ENCODE measurements at regions of chr11 and their contacts with region 1.

Region 1: GRCh38 chr11:76807206-76807875 is 24.2 kb downstream of the TSKU start:
- DNase-seq: peak; percentile 90 to 97 (median 95)
- ATAC-seq: peak; percentile 71 to 81
- H3K4me3 ChIP-seq: no peak overlapping the region
- H3K27ac ChIP-seq: no peak overlapping the region
- H3K4me1 ChIP-seq: peaks cover 6% of the 10 kb centered on the region
- H3K27me3 ChIP-seq: no peaks in the 10 kb centered on the region

Region 2: GRCh38 chr11:76588455-76589325 is 218.7 kb before region 1 on chr11:
- intact Hi-C with region 1: no loop called
- DNase-seq: peak; percentile 80 to 90 (median 89)
- ATAC-seq: peak; percentile 92 to 96
- H3K4me3 ChIP-seq: no peak overlapping the region
- H3K27ac ChIP-seq: peak overlapping the region; percentile 97
- H3K4me1 ChIP-seq: peaks cover 2% of the 10 kb centered on the region
- H3K27me3 ChIP-seq: no peaks in the 10 kb centered on the region

Region 3: DNA sequence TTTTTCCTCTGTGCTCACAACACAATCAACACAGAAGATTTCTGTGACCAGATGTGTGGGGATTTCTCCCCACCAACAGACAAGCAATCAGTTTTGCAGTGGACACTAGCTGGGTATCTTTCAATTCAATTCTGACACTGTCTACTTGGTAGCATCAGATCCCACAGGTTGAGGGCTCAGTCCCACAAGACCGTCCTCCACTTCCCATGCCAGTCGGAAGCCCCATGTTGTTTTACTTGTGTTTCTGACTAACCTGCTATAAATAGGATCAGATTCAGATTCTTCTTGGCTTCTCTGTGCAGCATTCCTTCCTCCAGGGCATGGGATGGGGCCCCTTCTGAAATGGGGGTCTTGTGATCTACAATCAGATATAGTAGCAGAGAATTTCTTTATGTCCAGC is 73.0 kb after region 1 on chr11:
- intact Hi-C with region 1: no loop called
- DNase-seq: no peak
- ATAC-seq: no peak
- H3K4me3 ChIP-seq: no peak overlapping the region
- H3K27ac ChIP-seq: no peak overlapping the region
- H3K4me1 ChIP-seq: no peaks in the 10 kb centered on the region
- H3K27me3 ChIP-seq: no peaks in the 10 kb centered on the region

Region 4: GRCh38 chr11:76919887-76920746 is 112.8 kb after region 1 on chr11:
- intact Hi-C with region 1: loop called (anchors 2 to 5 kb)
- DNase-seq: peak; percentile 77 to 91 (median 86)
- ATAC-seq: peak; percentile 91 to 95
- H3K4me3 ChIP-seq: no peak overlapping the region
- H3K27ac ChIP-seq: no peak overlapping the region
- H3K4me1 ChIP-seq: peaks cover 2% of the 10 kb centered on the region
- H3K27me3 ChIP-seq: no peaks in the 10 kb centered on the region